T-cell (primary cell): ENCODE measurements at regions of chr6 and their contacts with region 1.

Region 1: GRCh38 chr6:43455531-43456428 is at the start of gene DLK2:
- DNase-seq: peak in 34 of 35 experiments; percentile 20 to 67 (median 42)
- ATAC-seq: peak; percentile 62 to 77 (median 69)
- H3K4me3 ChIP-seq: peak within 1 kb of the TSS; percentile 63 to 75
- H3K4me3 Mint-ChIP-seq: peak within 1 kb of the TSS; percentile 78 to 85 (median 83)
- H3K27ac ChIP-seq: peak within 1 kb of the TSS; percentile 20
- H3K27ac Mint-ChIP-seq: peak within 1 kb of the TSS; percentile 75 to 79
- H3K4me1 ChIP-seq: peaks cover 0 to 18% of the 10 kb centered on the region in 2 experiments
- H3K4me1 Mint-ChIP-seq: peaks cover 11 to 17% (median 15%) of the 10 kb centered on the region in 3 donors
- H3K27me3 ChIP-seq: peaks cover 0 to 9% of the 10 kb centered on the region in 2 experiments
- H3K27me3 Mint-ChIP-seq: peaks cover 0 to 5% of the 10 kb centered on the region in 2 donors
- total RNA-seq, gene DLK2: 0.47 to 2.1 (median 1.4) TPM

Region 2: GRCh38 chr6:42403426-42403825 is 1052.4 kb before region 1 on chr6:
- CTCF ChIA-PET with region 1: no interaction called
- POLR2A ChIA-PET with region 1: interaction called in 1 of 2 experiments, 11 read pairs
- DNase-seq: no peak
- ATAC-seq: no peak
- H3K4me3 ChIP-seq: no peak overlapping the region
- H3K4me3 Mint-ChIP-seq: peak overlapping the region in 2 of 3 donors; percentile 3 to 47
- H3K27ac ChIP-seq: peak overlapping the region; percentile 61
- H3K27ac Mint-ChIP-seq: peak overlapping the region; percentile 86 to 92
- H3K4me1 ChIP-seq: peaks cover 6 to 68% of the 10 kb centered on the region in 2 experiments
- H3K4me1 Mint-ChIP-seq: peaks cover 84 to 89% (median 88%) of the 10 kb centered on the region in 3 donors
- H3K27me3 ChIP-seq: no peaks in the 10 kb centered on the region
- H3K27me3 Mint-ChIP-seq: no peaks in the 10 kb centered on the region

Region 3: DNA sequence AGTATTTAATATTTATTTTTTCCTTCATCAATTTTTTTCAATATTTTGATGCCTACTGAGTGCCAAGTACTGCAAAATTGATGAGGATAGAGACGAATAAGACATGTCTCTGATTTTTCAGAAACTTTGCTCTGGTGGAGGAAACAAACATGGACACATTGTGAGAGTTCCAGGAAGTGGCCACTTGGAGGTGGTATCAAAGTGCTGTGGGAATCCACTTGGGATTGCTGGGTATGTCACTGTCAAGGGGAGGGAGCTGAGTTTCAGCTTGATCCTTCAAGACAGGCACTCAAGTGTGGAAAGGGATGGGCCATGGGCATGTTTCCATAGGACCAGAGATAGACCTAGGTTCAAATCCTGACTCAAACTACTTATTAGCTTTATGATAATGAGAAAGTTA is 53.0 kb before region 1 on chr6:
- CTCF ChIA-PET with region 1: interaction called in 1 of 2 experiments, 3 read pairs
- POLR2A ChIA-PET with region 1: interaction called, 6 to 10 read pairs
- DNase-seq: no peak
- ATAC-seq: no peak
- H3K4me3 ChIP-seq: no peak overlapping the region
- H3K4me3 Mint-ChIP-seq: no peak overlapping the region
- H3K27ac ChIP-seq: no peak overlapping the region
- H3K27ac Mint-ChIP-seq: no peak overlapping the region
- H3K4me1 ChIP-seq: no peaks in the 10 kb centered on the region
- H3K4me1 Mint-ChIP-seq: peaks cover 0 to 3% (median 2%) of the 10 kb centered on the region in 3 donors
- H3K27me3 ChIP-seq: peaks cover 0 to 3% of the 10 kb centered on the region in 2 experiments
- H3K27me3 Mint-ChIP-seq: peaks cover 24% of the 10 kb centered on the region in 2 donors

Region 4: GRCh38 chr6:43412541-43412940 is 43.2 kb before region 1 on chr6:
- CTCF ChIA-PET with region 1: no interaction called
- POLR2A ChIA-PET with region 1: interaction called in 1 of 2 experiments, 10 read pairs
- DNase-seq: no peak
- ATAC-seq: no peak
- H3K4me3 ChIP-seq: no peak overlapping the region
- H3K4me3 Mint-ChIP-seq: no peak overlapping the region
- H3K27ac ChIP-seq: no peak overlapping the region
- H3K27ac Mint-ChIP-seq: no peak overlapping the region
- H3K4me1 ChIP-seq: no peaks in the 10 kb centered on the region
- H3K4me1 Mint-ChIP-seq: no peaks in the 10 kb centered on the region
- H3K27me3 ChIP-seq: peaks cover 0 to 12% of the 10 kb centered on the region in 2 experiments
- H3K27me3 Mint-ChIP-seq: peaks cover 4 to 5% of the 10 kb centered on the region in 2 donors

Region 5: DNA sequence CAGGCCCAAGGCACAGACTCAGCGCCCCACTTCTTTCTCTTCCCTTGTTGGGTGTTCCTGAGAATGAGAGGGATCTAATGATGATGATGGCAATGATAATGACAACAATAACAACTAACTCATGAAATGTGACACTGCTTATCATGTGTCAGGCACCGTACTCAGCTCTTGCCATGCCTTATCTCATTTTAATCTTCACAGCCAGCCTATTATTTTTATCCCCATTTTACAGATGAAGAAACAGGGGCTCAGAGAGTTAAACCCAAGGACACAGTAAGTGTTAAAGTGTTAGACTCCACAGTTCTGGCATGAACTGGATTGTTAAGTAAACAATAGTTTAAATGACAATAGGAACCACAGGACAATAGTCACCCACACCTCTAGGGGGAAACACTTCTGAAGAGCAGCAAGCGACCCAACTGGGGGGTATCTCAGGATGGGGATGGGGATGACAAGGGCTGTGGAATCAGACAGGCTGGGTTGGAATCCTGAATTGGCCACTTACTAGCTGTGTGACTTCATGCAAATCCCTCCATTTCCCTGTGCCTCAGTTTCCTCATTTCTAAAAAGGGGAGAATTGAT is 201.5 kb after region 1 on chr6:
- CTCF ChIA-PET with region 1: interaction called in 1 of 2 experiments, 10 read pairs
- POLR2A ChIA-PET with region 1: no interaction called
- DNase-seq: no peak
- ATAC-seq: no peak
- H3K4me3 ChIP-seq: no peak overlapping the region
- H3K4me3 Mint-ChIP-seq: no peak overlapping the region
- H3K27ac ChIP-seq: no peak overlapping the region
- H3K27ac Mint-ChIP-seq: no peak overlapping the region
- H3K4me1 ChIP-seq: no peaks in the 10 kb centered on the region
- H3K4me1 Mint-ChIP-seq: peaks cover 0 to 3% (median 0%) of the 10 kb centered on the region in 3 donors
- H3K27me3 ChIP-seq: peaks cover 0 to 7% of the 10 kb centered on the region in 2 experiments
- H3K27me3 Mint-ChIP-seq: peaks cover 0 to 4% of the 10 kb centered on the region in 2 donors